Naive thymus-derived CD4-positive, alpha-beta T cell (primary cell): ENCODE measurements at regions of chr19 and their contacts with region 1.

Region 1: GRCh38 chr19:37466798-37467607 is at the start of gene ZNF569:
- DNase-seq: peak; percentile 68 to 95 (median 92)
- ATAC-seq: peak; percentile 79
- H3K4me3 ChIP-seq: peak within 1 kb of the TSS; percentile 79
- H3K4me3 Mint-ChIP-seq: peak within 1 kb of the TSS; percentile 91 to 100 (median 95)
- H3K27ac ChIP-seq: peak within 1 kb of the TSS; percentile 96
- H3K27ac Mint-ChIP-seq: peak within 1 kb of the TSS; percentile 93 to 100 (median 98)
- H3K4me1 ChIP-seq: peaks cover 13 to 16% of the 10 kb centered on the region in 2 donors
- H3K4me1 Mint-ChIP-seq: peaks cover 26 to 54% (median 45%) of the 10 kb centered on the region in 7 donors
- H3K27me3 ChIP-seq: no peaks in the 10 kb centered on the region
- H3K27me3 Mint-ChIP-seq: no peaks in the 10 kb centered on the region
- total RNA-seq, gene ZNF569: 4.1 to 16.4 (median 8.5) TPM

Region 2: GRCh38 chr19:36114763-36115452 is 1352.1 kb before region 1 on chr19 and contains the start of gene POLR2I:
- CTCF ChIA-PET with region 1: no interaction called
- POLR2A ChIA-PET with region 1: no interaction called
- intact Hi-C with region 1: loop called (anchors 2 to 10 kb)
- DNase-seq: peak; percentile 95 to 100 (median 99)
- ATAC-seq: peak; percentile 92
- H3K4me3 ChIP-seq: peak within 1 kb of the TSS; percentile 97
- H3K4me3 Mint-ChIP-seq: peak within 1 kb of the TSS; percentile 89 to 98 (median 96)
- H3K27ac ChIP-seq: peak within 1 kb of the TSS; percentile 90
- H3K27ac Mint-ChIP-seq: peak within 1 kb of the TSS; percentile 97 to 99 (median 98)
- H3K4me1 ChIP-seq: peaks cover 14 to 15% of the 10 kb centered on the region in 2 donors
- H3K4me1 Mint-ChIP-seq: peaks cover 27 to 54% (median 42%) of the 10 kb centered on the region in 7 donors
- H3K27me3 ChIP-seq: no peaks in the 10 kb centered on the region
- H3K27me3 Mint-ChIP-seq: peaks cover 0 to 5% (median 0%) of the 10 kb centered on the region in 5 donors
- total RNA-seq, gene POLR2I: 20.9 to 56.7 (median 44.7) TPM

Region 3: GRCh38 chr19:36665832-36666231 is 801.2 kb before region 1 on chr19:
- CTCF ChIA-PET with region 1: no interaction called
- POLR2A ChIA-PET with region 1: no interaction called
- intact Hi-C with region 1: loop called (anchors 1 kb)
- DNase-seq: peak in 1 of 9 donors; percentile 2
- ATAC-seq: no peak
- H3K4me3 ChIP-seq: peak overlapping the region; percentile 88
- H3K4me3 Mint-ChIP-seq: peak overlapping the region; percentile 91 to 100 (median 98)
- H3K27ac ChIP-seq: no peak overlapping the region
- H3K27ac Mint-ChIP-seq: peak overlapping the region; percentile 29 to 99 (median 93)
- H3K4me1 ChIP-seq: peaks cover 0 to 10% of the 10 kb centered on the region in 2 donors
- H3K4me1 Mint-ChIP-seq: peaks cover 17 to 42% (median 35%) of the 10 kb centered on the region in 7 donors
- H3K27me3 ChIP-seq: no peaks in the 10 kb centered on the region
- H3K27me3 Mint-ChIP-seq: no peaks in the 10 kb centered on the region

Region 4: GRCh38 chr19:36915992-36916830 is 550.8 kb before region 1 on chr19 and contains the starts of genes ZNF568 and ZNF829:
- CTCF ChIA-PET with region 1: no interaction called
- POLR2A ChIA-PET with region 1: no interaction called
- intact Hi-C with region 1: loop called (anchors 1 kb)
- DNase-seq: peak; percentile 78 to 96 (median 93)
- ATAC-seq: peak; percentile 97
- H3K4me3 ChIP-seq: peak within 1 kb of the TSS; percentile 95
- H3K4me3 Mint-ChIP-seq: peak within 1 kb of the TSS; percentile 87 to 99 (median 95)
- H3K27ac ChIP-seq: peak within 1 kb of the TSS; percentile 94
- H3K27ac Mint-ChIP-seq: peak within 1 kb of the TSS; percentile 90 to 97 (median 94)
- H3K4me1 ChIP-seq: peaks cover 8 to 13% of the 10 kb centered on the region in 2 donors
- H3K4me1 Mint-ChIP-seq: peaks cover 19 to 46% (median 29%) of the 10 kb centered on the region in 7 donors
- H3K27me3 ChIP-seq: no peaks in the 10 kb centered on the region
- H3K27me3 Mint-ChIP-seq: no peaks in the 10 kb centered on the region
- total RNA-seq, gene ZNF568: 8.2 to 18.0 (median 9.3) TPM
- total RNA-seq, gene ZNF829: 2.6 to 9.0 (median 6.3) TPM

Region 5: DNA sequence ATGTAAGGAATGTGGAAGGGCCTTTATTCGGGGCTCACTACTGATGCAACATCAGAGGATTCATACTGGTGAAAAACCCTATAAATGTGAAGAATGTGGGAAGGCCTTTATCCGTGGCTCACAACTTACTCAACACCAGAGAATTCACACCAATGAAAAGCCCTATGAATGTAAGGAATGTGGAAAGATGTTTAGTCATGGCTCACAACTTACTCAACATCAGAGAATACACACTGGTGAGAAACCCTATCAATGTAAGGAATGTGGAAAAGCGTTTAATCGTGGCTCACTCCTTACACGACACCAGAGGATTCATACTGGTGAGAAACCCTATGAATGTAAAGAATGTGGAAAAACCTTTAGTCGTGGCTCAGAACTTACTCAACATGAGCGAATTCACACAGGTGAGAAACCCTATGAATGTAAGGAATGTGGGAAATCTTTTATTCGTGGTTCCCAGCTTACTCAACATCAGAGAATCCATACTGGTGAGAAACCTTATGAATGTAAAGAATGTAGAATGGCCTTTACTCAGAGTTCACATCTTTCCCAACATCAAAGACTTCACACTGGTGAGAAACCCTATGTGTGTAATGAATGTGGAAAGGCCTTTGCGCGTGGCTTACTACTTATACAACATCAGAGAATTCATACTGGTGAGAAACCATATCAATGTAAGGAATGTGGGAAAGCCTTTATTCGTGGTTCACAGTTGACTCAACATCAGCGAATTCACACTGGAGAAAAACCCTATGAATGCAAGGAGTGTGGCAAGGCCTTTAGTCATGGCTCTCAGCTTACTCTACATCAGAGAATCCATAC is 338.8 kb before region 1 on chr19:
- CTCF ChIA-PET with region 1: no interaction called
- POLR2A ChIA-PET with region 1: no interaction called
- intact Hi-C with region 1: no loop called
- DNase-seq: no peak
- ATAC-seq: no peak
- H3K4me3 ChIP-seq: peak overlapping the region; percentile 39
- H3K4me3 Mint-ChIP-seq: no peak overlapping the region
- H3K27ac ChIP-seq: no peak overlapping the region
- H3K27ac Mint-ChIP-seq: no peak overlapping the region
- H3K4me1 ChIP-seq: no peaks in the 10 kb centered on the region
- H3K4me1 Mint-ChIP-seq: no peaks in the 10 kb centered on the region
- H3K27me3 ChIP-seq: no peaks in the 10 kb centered on the region
- H3K27me3 Mint-ChIP-seq: no peaks in the 10 kb centered on the region

Region 6: DNA sequence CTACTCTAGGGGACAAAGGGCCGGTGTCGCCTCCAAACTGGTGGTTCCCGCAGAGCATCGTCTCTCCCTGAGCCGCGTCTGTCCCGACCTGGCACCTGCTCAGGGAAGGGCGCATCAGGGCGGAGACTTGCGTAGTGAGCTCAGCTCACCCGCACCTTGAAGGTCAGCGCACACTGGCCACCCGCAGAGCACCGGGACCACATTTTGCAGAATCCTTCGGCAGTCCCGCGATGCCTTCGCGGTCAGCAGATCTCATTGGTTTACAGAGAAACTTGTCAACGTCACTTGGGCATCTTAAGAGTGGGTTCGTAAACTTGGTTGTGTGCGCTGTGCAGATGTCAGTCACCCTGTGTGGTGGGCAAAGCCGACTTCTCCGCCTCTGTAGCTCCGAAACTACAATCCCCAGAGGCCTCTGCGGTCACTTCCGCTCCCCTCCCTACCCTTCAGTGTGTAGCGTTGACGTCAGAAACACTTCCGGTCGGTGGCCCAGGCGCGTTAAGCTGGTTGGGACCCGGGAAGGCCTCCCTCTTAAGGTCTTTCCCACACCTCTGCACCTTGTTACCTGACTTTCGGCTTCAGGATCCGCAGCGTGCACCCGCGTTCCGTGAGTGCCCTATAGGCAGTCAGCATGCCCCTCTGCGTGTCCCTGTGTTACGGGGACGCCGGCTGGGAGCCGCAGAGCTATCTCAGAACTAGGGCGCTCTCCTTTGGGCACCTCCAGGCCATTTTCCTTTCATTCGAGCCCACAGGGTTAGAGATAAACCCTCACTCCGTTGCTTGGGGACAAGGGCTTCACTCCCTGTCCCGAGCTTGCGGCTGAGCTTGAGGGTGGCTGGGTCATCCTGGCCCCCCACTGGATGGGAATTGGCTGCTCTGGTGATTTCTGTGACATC is 132.6 kb before region 1 on chr19:
- CTCF ChIA-PET with region 1: no interaction called
- POLR2A ChIA-PET with region 1: interaction called, 5 read pairs
- intact Hi-C with region 1: loop called in 1 of 2 experiments (anchors 1 kb)
- DNase-seq: peak; percentile 52 to 93 (median 84)
- ATAC-seq: peak; percentile 99
- H3K4me3 ChIP-seq: peak overlapping the region; percentile 69
- H3K4me3 Mint-ChIP-seq: peak overlapping the region; percentile 82 to 93 (median 90)
- H3K27ac ChIP-seq: peak overlapping the region; percentile 88
- H3K27ac Mint-ChIP-seq: peak overlapping the region; percentile 77 to 97 (median 93)
- H3K4me1 ChIP-seq: peaks cover 6 to 10% of the 10 kb centered on the region in 2 donors
- H3K4me1 Mint-ChIP-seq: peaks cover 9 to 47% (median 33%) of the 10 kb centered on the region in 7 donors
- H3K27me3 ChIP-seq: no peaks in the 10 kb centered on the region
- H3K27me3 Mint-ChIP-seq: no peaks in the 10 kb centered on the region

Region 7: GRCh38 chr19:37346091-37346490 is 120.9 kb before region 1 on chr19:
- CTCF ChIA-PET with region 1: no interaction called
- POLR2A ChIA-PET with region 1: no interaction called
- intact Hi-C with region 1: no loop called
- DNase-seq: no peak
- ATAC-seq: no peak
- H3K4me3 ChIP-seq: no peak overlapping the region
- H3K4me3 Mint-ChIP-seq: no peak overlapping the region
- H3K27ac ChIP-seq: no peak overlapping the region
- H3K27ac Mint-ChIP-seq: no peak overlapping the region
- H3K4me1 ChIP-seq: no peaks in the 10 kb centered on the region
- H3K4me1 Mint-ChIP-seq: peaks cover 0 to 7% (median 0%) of the 10 kb centered on the region in 7 donors
- H3K27me3 ChIP-seq: no peaks in the 10 kb centered on the region
- H3K27me3 Mint-ChIP-seq: no peaks in the 10 kb centered on the region

Region 8: DNA sequence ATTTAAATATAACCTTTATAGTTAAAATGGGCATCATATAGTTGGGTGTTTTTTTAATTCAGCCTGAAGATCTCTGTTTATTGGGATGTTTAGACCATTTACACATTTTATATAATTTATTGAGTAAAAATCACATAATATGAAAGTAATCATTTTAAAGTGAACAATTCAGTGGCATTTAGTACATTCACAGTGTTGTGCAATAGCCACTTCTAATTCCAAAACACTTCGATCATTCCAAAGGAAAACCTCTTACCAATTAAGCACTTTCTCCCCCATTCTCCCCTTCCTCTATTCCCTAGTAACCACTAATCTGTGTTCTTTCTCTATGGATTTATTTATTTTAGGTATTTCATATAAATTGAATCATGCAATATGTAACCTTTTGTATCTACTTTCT is 65.9 kb before region 1 on chr19:
- CTCF ChIA-PET with region 1: no interaction called
- POLR2A ChIA-PET with region 1: no interaction called
- intact Hi-C with region 1: no loop called
- DNase-seq: no peak
- ATAC-seq: no peak
- H3K4me3 ChIP-seq: no peak overlapping the region
- H3K4me3 Mint-ChIP-seq: no peak overlapping the region
- H3K27ac ChIP-seq: no peak overlapping the region
- H3K27ac Mint-ChIP-seq: no peak overlapping the region
- H3K4me1 ChIP-seq: no peaks in the 10 kb centered on the region
- H3K4me1 Mint-ChIP-seq: no peaks in the 10 kb centered on the region
- H3K27me3 ChIP-seq: no peaks in the 10 kb centered on the region
- H3K27me3 Mint-ChIP-seq: no peaks in the 10 kb centered on the region

Region 9: GRCh38 chr19:37655689-37656371 is 188.8 kb after region 1 on chr19:
- CTCF ChIA-PET with region 1: no interaction called
- POLR2A ChIA-PET with region 1: interaction called, 6 read pairs
- intact Hi-C with region 1: loop called (anchors 1 kb)
- DNase-seq: peak; percentile 74 to 90 (median 86)
- ATAC-seq: peak; percentile 86
- H3K4me3 ChIP-seq: peak overlapping the region; percentile 95
- H3K4me3 Mint-ChIP-seq: peak overlapping the region; percentile 82 to 99 (median 96)
- H3K27ac ChIP-seq: peak overlapping the region; percentile 89
- H3K27ac Mint-ChIP-seq: peak overlapping the region; percentile 81 to 99 (median 97)
- H3K4me1 ChIP-seq: peaks cover 8 to 16% of the 10 kb centered on the region in 2 donors
- H3K4me1 Mint-ChIP-seq: peaks cover 28 to 40% (median 33%) of the 10 kb centered on the region in 7 donors
- H3K27me3 ChIP-seq: no peaks in the 10 kb centered on the region
- H3K27me3 Mint-ChIP-seq: peaks cover 0 to 3% (median 0%) of the 10 kb centered on the region in 5 donors

Region 10: DNA sequence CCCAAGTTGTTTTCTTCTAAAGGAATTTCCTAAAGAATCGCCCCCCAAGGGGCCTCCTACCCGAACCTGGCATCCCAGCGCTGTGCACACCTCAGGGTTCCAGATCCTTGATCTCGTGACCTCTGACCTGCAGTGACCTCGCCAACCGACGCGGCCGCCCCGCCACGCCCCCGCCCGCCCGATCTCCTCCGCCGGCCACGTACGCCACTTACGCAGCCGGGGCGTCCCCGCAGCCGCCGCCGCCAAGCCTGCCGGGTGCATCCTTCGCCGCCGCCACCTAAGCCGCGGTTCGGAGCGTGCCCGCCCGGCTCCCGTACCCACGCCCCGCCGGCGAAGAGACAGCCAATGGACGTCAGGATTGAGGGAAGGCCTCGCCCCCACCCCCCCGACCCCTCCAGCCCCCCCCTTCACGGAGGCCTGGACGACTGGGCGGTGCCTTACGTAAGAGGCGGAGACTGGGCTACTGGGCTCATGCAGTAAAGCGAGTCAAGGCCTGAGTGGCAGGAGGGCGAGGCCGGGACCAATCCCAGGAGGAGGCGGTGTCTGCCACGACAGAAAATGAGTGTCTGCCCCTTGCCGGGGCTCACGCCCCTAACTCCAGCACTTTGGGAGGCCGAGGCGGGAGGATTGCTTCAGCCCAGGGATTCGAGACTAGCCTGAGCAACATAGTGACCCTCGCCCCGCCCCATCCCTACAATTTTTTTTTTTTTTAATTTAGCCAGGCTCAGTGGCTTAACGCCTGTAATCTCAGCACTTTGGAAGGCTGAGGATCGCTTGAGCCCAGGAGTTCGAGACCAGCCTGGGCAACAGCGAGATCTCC is 848.9 kb after region 1 on chr19 and contains the start of gene YIF1B:
- CTCF ChIA-PET with region 1: no interaction called
- POLR2A ChIA-PET with region 1: no interaction called
- intact Hi-C with region 1: loop called in 1 of 2 experiments (anchors 5 kb)
- DNase-seq: peak; percentile 93 to 97 (median 95)
- ATAC-seq: peak; percentile 95
- H3K4me3 ChIP-seq: peak within 1 kb of the TSS; percentile 90
- H3K4me3 Mint-ChIP-seq: peak within 1 kb of the TSS; percentile 87 to 96 (median 91)
- H3K27ac ChIP-seq: peak within 1 kb of the TSS; percentile 97
- H3K27ac Mint-ChIP-seq: peak within 1 kb of the TSS; percentile 90 to 97 (median 93)
- H3K4me1 ChIP-seq: peaks cover 14 to 30% of the 10 kb centered on the region in 2 donors
- H3K4me1 Mint-ChIP-seq: peaks cover 29 to 57% (median 48%) of the 10 kb centered on the region in 7 donors
- H3K27me3 ChIP-seq: no peaks in the 10 kb centered on the region
- H3K27me3 Mint-ChIP-seq: no peaks in the 10 kb centered on the region
- total RNA-seq, gene YIF1B: 26.1 to 84.7 (median 38.0) TPM